ENCODE measurements at regions of chr16 and their contacts with region 1.

Region 1: DNA sequence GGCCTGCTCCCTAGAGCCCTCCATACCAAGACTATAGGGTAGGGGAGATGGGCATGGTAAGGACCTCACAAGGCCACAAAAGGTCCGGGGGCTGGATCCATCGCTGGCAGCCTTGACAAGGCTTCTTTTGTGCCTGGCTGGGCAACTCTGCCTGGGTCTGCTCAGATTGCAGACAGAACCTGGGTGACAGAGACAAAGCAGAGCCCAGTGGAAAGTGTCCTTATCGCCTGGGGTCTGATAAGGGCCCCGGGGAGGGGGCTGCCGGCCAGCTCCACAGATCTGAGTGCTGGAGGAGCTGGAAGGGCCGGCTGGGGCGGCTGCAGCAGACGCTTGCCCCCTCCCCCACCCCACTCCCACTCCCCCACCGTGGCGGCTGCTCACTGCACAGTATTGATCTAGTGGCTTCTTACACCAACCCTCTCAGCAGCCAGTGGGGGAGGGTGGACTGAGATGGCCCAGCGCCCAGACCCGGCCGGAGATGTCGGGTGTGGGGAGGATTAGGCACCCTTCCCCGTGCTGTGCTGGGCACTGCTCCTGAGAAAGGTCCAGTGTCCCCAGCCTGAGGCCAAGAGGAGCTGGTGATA is 7.2 kb downstream of the MMP15 start:
- DNase-seq: peak; percentile 60 to 92 (median 87)
- ATAC-seq: peak; percentile 73 to 75
- H3K4me3 ChIP-seq: no peak overlapping the region
- H3K27ac ChIP-seq: peak overlapping the region; percentile 58
- H3K4me1 ChIP-seq: peaks cover 41% of the 10 kb centered on the region
- H3K27me3 ChIP-seq: no peaks in the 10 kb centered on the region

Region 2: DNA sequence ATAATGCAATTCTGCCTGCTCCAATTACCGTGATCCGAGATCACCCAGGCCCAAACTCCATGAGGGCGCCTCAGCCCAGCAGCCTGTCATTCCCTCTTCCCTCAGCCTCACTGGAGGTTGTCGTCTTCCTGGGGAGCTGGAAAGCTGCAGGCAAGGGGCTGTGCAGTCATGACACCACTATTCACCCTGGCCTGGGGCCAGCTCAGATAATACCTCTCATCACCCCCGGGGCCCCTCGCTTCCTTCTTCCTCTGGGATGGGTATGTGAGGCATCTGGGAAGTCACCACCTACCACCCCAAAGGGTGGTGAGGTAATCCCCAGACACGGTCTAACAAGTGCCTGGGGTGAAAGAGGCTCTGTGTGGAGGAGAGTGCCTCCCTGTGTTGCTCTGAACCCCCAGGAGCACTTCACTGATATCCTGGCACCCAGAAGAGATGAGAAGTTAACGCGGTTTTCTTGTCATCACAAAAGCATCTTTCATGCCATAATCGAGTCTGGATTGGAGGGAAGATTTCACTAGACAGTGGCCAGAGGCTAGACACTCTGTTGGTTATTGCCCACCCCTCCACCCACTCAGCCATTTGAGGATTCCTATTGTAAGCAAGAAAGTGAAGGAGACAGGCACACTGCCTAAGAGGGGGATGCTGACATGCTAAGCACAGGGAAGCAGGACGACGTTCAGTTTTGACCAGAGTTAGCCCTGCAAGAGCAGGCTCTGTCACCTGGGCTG is 77.9 kb after region 1 on chr16:
- intact Hi-C with region 1: loop called in 1 of 4 experiments (anchors 5 kb)
- DNase-seq: peak in 2 of 3 donors; percentile 61 to 64
- ATAC-seq: peak; percentile 41 to 47
- H3K4me3 ChIP-seq: no peak overlapping the region
- H3K27ac ChIP-seq: no peak overlapping the region
- H3K4me1 ChIP-seq: peaks cover 3% of the 10 kb centered on the region
- H3K27me3 ChIP-seq: no peaks in the 10 kb centered on the region

Measured in right cardiac atrium (tissue), 5 donors.